PC-9 (cell line): ENCODE measurements at regions of chr1 and their contacts with region 1.

Region 1: DNA sequence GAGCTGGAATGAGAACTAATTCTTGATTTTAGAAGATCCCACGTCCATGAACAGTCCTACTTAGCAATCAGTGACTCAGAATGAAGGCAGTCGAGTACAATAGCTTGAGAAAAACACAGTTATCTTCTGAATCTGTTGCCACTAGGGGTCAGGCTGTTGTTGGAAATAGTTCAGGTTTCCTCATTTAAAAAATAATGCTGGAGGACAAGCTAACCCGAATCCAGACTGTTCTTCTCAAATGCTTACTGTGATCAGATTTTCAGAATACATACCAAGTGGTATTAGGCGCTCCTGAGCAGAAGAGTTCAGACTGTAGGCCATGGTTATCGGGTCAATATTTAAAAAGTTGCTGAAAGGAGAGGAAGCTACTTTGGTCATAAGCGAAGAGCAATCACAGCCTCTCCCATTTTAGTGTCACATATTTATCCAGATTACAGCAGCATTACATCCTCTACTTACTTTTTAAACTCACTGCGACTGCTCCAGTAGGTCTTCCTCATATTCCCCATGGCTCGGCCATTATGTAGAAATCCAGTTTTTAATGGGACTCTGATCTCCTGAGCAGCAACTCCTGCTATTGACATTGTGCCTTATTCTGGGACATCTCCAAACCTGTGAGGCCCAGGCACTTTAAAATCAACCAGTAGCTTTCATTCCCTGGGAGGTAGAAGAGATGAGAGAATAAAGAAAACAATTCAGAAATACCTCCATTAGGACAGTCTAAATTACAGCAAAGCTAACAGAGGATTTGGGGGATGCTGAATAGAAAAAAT is 10.9 kb downstream of the ERRFI1 start:
- DNase-seq: peak; percentile 58 to 72
- H3K4me3 ChIP-seq: peak overlapping the region; percentile 91; the same call in 1 of the 2 replicates
- H3K27ac ChIP-seq: peak overlapping the region; percentile 90
- H3K4me1 ChIP-seq: peaks cover 75% of the 10 kb centered on the region
- H3K27me3 ChIP-seq: no peaks in the 10 kb centered on the region
- CTCF ChIP-seq: peak; percentile 70

Region 2: DNA sequence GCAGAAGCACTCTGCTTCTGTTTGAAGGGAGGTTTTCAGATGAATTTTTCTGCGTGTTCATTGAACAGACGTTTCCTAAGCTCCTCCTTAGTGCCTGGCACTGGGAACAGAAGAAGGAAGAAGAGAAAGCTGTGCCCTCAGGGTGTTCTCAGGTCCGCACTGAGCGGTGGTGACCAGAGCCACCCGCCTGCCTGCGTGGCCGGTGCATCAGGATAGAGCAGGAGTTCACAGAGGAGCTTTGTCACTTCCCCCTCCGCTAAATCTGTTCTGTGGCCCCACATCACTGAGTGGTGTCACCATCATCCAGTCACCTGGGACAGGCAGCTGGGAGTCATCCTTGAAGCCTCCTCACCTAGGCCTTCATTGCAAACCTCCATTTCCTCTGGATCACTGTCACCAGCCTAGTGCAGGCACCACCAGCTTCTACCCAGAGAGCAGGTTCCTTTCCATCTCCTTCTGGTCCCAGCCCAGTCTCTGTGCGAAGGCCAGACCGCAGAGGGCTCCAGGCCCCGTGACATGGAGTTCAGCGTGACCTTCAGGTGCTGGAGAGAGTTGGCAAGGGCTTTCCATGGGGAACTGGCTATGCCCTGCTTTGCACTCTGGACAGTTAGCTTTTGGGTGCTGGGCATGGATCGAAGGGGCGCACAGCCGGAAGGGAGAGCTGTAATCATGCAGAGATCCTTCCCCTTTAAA is 32.0 kb before region 1 on chr1:
- CTCF ChIA-PET with region 1: interaction called, 8 read pairs
- POLR2A ChIA-PET with region 1: interaction called, 3 read pairs
- intact Hi-C with region 1: loop called (anchors 2 kb)
- DNase-seq: no peak
- H3K4me3 ChIP-seq: no peak overlapping the region
- H3K27ac ChIP-seq: peak overlapping the region; percentile 46; the same call in 1 of the 2 replicates
- H3K4me1 ChIP-seq: peaks cover 10% of the 10 kb centered on the region
- H3K27me3 ChIP-seq: no peaks in the 10 kb centered on the region
- CTCF ChIP-seq: no peak

Region 3: DNA sequence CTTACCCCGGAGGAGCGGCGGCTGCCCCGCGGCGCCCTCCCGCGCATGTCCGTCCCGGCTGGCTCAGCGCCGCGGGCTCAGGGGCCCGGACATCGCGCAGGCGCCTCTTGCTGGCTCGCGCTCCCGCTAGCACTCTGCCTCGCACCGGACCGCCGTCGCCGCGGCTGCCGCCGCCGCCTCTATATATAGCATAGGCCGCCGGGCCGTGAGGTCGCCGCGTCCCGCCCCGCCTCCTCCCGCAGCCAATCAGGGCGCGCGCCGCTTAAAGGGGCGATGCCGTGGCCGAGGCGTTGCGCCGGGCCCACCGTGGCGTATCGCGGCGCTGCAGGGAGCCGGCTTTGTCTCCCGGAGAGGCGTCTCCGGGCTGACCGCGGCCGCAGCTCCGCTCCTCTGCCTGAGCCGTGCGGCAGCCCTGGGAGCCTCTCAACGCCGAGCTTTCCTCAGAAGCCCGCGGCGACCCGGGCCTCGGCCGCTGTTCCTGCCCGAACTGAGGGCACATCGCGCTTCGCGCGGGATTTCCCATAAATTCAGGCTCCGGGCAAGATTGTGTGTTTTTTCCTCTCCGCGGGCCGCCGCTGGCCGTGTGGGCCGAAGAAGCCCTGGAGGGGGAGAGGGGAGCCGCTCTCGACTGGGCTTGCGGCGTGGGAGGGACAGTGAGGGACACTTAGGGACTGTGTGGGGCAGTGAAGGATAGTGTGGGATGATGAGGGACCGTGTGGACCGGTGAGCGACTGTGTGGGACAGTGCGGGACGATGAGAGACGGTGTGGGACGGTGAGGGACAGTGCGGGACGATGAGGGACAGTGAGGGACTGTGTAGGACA is 11.1 kb after region 1 on chr1 and contains the start of gene ERRFI1:
- CTCF ChIA-PET with region 1: interaction called, 6 read pairs
- POLR2A ChIA-PET with region 1: interaction called, 6 read pairs
- intact Hi-C with region 1: loop called (anchors 1 kb)
- DNase-seq: peak; percentile 74 to 95
- H3K4me3 ChIP-seq: peak within 1 kb of the TSS; percentile 91
- H3K27ac ChIP-seq: peak within 1 kb of the TSS; percentile 98
- H3K4me1 ChIP-seq: peaks cover 26% of the 10 kb centered on the region
- H3K27me3 ChIP-seq: no peaks in the 10 kb centered on the region
- CTCF ChIP-seq: no peak
- total RNA-seq, gene ERRFI1: 44.9 and 47.8 TPM in 2 replicates

Region 4: DNA sequence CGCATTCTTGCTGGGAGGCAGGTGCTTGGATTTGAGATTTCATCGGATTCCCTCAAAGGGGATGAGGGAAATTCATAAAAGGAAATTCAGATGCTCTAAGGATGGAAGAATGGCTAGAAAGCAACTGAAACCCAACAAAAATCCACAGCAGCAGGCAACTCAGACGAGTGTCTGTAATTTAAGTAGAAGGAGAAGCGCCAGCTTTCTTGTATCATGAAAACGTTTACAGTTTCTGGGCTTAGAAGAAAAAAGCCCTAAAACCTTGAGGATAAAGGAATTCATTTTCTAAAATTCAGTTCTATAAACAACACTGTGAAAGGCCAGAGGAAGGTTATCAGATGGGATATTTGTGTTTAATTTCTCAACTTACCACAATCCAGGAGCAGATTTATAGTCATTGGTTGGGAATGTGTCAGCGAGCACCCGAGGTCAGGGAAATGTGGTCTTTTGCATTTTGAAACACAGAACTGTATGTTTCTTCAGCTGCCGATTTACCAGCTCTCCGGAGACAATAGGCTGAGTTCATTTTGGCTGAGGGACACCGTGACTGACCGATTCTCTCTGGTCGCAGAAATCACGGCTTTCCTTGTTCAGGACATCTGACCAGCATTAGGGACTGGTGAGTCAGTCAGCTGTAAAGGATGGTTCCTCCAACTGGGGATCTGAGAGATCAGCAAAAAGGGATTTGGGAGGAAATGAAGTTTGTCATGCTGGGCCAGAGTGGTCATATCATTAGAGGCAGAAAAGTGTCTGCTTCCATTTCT is 122.4 kb after region 1 on chr1:
- CTCF ChIA-PET with region 1: no interaction called
- POLR2A ChIA-PET with region 1: no interaction called
- intact Hi-C with region 1: loop called (anchors 5 kb)
- DNase-seq: peak; percentile 55 to 94
- H3K4me3 ChIP-seq: peak overlapping the region; percentile 54; the same call in 1 of the 2 replicates
- H3K27ac ChIP-seq: peak overlapping the region; percentile 100
- H3K4me1 ChIP-seq: peaks cover 85% of the 10 kb centered on the region
- H3K27me3 ChIP-seq: no peaks in the 10 kb centered on the region
- CTCF ChIP-seq: no peak

Region 5: DNA sequence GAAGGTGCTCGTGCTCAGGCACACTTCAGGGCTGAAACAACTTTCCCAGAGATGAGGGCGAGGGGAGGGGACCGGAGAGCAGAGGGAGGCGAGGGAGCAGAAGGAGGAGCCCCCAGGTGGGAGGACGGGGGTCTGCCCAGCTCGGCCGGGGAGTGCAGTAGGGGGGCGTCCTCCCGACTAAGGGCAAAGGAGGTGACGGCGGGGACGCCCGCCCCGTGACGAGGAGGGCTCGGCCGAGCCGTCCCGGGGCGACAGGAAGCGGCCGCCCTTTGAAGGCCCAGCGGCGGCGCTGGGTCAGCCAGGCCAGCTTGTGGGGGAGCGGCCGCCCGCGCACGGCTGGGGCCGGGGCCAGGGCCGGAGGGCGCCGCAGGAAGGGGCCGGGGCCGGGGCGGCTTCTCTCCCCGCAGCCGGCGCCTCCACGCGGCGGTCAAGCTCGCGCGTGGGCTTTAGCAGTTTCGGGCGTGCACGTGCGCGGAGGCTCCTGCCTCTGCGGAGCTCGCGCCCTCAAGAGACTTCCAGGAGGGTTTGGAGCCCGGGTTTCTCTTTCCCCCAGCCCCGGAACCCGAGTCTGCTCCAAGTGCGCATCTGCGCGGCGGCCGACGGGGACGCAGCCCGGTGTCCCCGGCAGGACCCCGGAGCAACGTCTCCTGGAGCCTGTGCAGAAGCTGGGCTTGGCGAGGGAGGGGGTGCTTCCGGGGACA is 201.9 kb after region 1 on chr1:
- CTCF ChIA-PET with region 1: no interaction called
- POLR2A ChIA-PET with region 1: no interaction called
- intact Hi-C with region 1: no loop called
- DNase-seq: no peak
- H3K4me3 ChIP-seq: no peak overlapping the region
- H3K27ac ChIP-seq: no peak overlapping the region
- H3K4me1 ChIP-seq: peaks cover 29% of the 10 kb centered on the region
- H3K27me3 ChIP-seq: no peaks in the 10 kb centered on the region
- CTCF ChIP-seq: no peak

Region 6: GRCh38 chr1:8232036-8232757 is 217.0 kb after region 1 on chr1:
- CTCF ChIA-PET with region 1: no interaction called
- POLR2A ChIA-PET with region 1: no interaction called
- intact Hi-C with region 1: no loop called
- DNase-seq: no peak
- H3K4me3 ChIP-seq: no peak overlapping the region
- H3K27ac ChIP-seq: no peak overlapping the region
- H3K4me1 ChIP-seq: no peaks in the 10 kb centered on the region
- H3K27me3 ChIP-seq: no peaks in the 10 kb centered on the region
- CTCF ChIP-seq: no peak

Region 7: DNA sequence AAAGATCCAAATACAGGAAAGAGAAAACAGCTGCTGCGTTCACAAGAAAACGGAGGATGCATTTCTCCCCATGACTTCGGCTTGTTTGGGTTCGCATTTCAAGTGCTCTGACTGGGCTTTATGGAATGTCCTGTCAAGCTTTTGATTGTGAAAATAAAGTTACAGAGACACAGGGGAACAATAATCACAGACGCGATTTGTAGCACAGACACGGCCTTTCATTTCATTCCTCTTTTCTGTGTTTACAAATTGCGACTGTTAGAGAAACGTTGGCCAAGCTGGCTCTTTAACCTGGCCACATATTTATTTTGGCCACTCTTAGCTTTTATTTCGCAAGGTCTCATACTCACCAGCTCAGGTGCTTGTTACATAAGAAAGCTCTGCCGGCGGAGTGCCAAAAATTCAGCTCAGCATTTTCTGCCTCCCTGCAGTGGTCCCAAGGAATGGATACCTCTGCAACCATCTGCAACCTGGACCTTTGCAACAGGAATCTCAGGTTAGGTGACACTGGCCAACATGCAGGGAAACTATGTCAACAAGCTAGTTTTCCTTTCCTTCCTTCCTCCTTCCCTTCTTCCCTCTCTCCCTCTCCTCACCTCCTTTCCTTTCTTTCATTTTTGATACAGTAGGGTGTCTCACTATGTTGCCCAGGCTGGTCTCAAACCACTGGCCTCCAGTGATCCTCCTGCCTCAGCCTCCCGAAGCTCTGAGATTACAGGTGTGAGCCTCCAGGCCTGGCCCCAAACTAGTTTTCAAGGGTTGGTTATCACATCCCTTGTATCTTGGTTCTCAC is 244.5 kb after region 1 on chr1:
- CTCF ChIA-PET with region 1: no interaction called
- POLR2A ChIA-PET with region 1: interaction called, 17 read pairs
- intact Hi-C with region 1: loop called (anchors 2 kb)
- DNase-seq: peak; percentile 80 to 82
- H3K4me3 ChIP-seq: peak overlapping the region; percentile 49; the same call in 1 of the 2 replicates
- H3K27ac ChIP-seq: peak overlapping the region; percentile 100
- H3K4me1 ChIP-seq: peaks cover 43% of the 10 kb centered on the region
- H3K27me3 ChIP-seq: no peaks in the 10 kb centered on the region
- CTCF ChIP-seq: no peak

Region 8: DNA sequence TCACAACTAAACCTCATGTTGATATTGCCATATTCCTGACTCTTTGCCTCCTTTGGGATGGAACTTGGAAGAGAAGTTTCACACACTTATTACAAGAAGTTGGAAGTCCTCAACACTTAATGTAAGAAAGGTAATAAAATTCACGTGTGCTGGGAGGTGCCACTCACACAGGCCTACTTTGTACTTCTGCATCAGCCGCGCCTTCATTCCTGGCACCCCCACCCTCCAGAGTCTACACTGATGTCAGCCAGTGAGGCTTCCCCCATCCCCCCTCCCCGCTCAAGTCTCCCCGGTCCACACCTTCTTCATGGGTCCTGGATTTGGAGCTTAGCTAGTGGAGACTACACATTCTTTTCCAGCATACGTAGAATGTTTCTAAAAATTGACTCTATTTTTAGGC is 277.9 kb after region 1 on chr1:
- CTCF ChIA-PET with region 1: no interaction called
- POLR2A ChIA-PET with region 1: no interaction called
- intact Hi-C with region 1: no loop called
- DNase-seq: no peak
- H3K4me3 ChIP-seq: no peak overlapping the region
- H3K27ac ChIP-seq: no peak overlapping the region
- H3K4me1 ChIP-seq: no peaks in the 10 kb centered on the region
- H3K27me3 ChIP-seq: no peaks in the 10 kb centered on the region
- CTCF ChIP-seq: no peak